Caco-2 (cell line): ENCODE measurements at regions of chr2 and their contacts with region 1.

Region 1: GRCh38 chr2:31835450-31835849 is 175.4 kb downstream of the MEMO1 start:
- DNase-seq: no peak
- H3K4me3 ChIP-seq: no peak overlapping the region
- H3K4me3 Mint-ChIP-seq: no peak overlapping the region
- H3K27ac Mint-ChIP-seq: no peak overlapping the region
- H3K4me1 ChIP-seq: 0 out of 2 replicates have a peak, but pooled peaks cover 3% of the 10 kb centered on the region
- H3K4me1 Mint-ChIP-seq: no peaks in the 10 kb centered on the region
- H3K27me3 ChIP-seq: no peaks in the 10 kb centered on the region
- H3K27me3 Mint-ChIP-seq: no peaks in the 10 kb centered on the region
- CTCF ChIP-seq: no peak

Region 2: DNA sequence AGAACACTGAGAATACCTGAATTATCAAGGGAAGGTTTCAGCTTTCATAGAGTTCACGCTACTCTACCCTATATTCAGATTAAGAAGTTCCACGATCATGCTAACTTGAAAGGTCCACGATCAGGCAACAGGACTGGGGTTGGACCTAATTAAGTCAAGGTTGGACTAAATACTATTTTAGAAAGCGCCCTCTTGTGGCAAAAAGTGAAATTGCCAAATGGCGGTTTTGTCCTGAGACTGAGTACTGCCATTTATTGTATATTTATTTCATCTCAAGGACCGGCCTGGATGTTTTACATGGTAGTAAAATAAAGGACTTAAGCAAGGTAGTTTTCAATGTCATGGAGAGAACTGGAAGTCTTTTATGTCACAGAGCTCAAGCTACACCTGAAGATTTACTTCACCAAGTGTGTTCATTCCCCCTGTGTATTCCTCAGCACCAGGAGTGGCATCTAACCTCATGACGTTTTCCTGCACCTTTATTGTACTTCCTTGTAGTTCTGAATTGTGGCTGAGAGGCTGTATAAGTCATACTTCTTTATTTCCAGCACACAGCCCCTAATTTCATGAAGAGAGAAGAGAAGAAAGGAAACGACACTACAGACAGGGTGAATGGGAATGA is 311.5 kb before region 1 on chr2:
- CTCF ChIA-PET with region 1: interaction called, 3 read pairs
- POLR2A ChIA-PET with region 1: no interaction called
- intact Hi-C with region 1: loop called (anchors 5 kb)
- DNase-seq: peak; percentile 46 to 65
- H3K4me3 ChIP-seq: no peak overlapping the region
- H3K4me3 Mint-ChIP-seq: no peak overlapping the region
- H3K27ac Mint-ChIP-seq: no peak overlapping the region
- H3K4me1 ChIP-seq: no peaks in the 10 kb centered on the region
- H3K4me1 Mint-ChIP-seq: no peaks in the 10 kb centered on the region
- H3K27me3 ChIP-seq: no peaks in the 10 kb centered on the region
- H3K27me3 Mint-ChIP-seq: peaks cover 3% of the 10 kb centered on the region
- CTCF ChIP-seq: peak; percentile 63 to 76

Region 3: GRCh38 chr2:31654241-31654640 is 181.2 kb before region 1 on chr2:
- CTCF ChIA-PET with region 1: no interaction called
- POLR2A ChIA-PET with region 1: no interaction called
- intact Hi-C with region 1: no loop called
- DNase-seq: no peak
- H3K4me3 ChIP-seq: no peak overlapping the region
- H3K4me3 Mint-ChIP-seq: no peak overlapping the region
- H3K27ac Mint-ChIP-seq: no peak overlapping the region
- H3K4me1 ChIP-seq: no peaks in the 10 kb centered on the region
- H3K4me1 Mint-ChIP-seq: no peaks in the 10 kb centered on the region
- H3K27me3 ChIP-seq: no peaks in the 10 kb centered on the region
- H3K27me3 Mint-ChIP-seq: peaks cover 33% of the 10 kb centered on the region
- CTCF ChIP-seq: no peak

Region 4: DNA sequence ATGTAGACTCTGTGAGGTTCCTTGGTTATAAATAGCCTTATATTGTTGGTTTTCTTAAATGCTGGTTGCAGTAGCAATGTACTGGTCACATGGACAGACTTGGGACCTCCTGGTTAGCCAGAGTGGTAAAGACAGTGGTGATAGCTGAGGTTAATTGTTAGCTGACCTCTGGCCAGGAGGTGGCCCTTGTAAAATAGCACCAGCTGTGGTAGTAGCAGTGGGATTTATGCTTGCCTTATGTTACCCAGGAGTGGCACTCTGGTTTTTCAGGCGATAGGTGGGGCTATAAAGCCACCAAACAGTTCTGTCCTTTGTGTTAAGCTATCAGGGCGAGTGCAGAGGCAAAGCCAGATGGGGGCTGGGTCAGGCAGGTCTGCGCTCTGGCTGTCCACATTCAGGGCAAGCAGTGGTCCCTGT is 160.0 kb before region 1 on chr2:
- CTCF ChIA-PET with region 1: interaction called, 4 read pairs
- POLR2A ChIA-PET with region 1: no interaction called
- intact Hi-C with region 1: loop called (anchors 1 kb)
- DNase-seq: peak; percentile 49 to 57
- H3K4me3 ChIP-seq: no peak overlapping the region
- H3K4me3 Mint-ChIP-seq: no peak overlapping the region
- H3K27ac Mint-ChIP-seq: no peak overlapping the region
- H3K4me1 ChIP-seq: no peaks in the 10 kb centered on the region
- H3K4me1 Mint-ChIP-seq: no peaks in the 10 kb centered on the region
- H3K27me3 ChIP-seq: no peaks in the 10 kb centered on the region
- H3K27me3 Mint-ChIP-seq: peaks cover 6% of the 10 kb centered on the region
- CTCF ChIP-seq: peak; percentile 20

Region 5: GRCh38 chr2:31729764-31730092 is 105.7 kb before region 1 on chr2:
- CTCF ChIA-PET with region 1: no interaction called
- POLR2A ChIA-PET with region 1: no interaction called
- intact Hi-C with region 1: loop called (anchors 1 kb)
- DNase-seq: peak in 1 of 2 experiments; percentile 42
- H3K4me3 ChIP-seq: no peak overlapping the region
- H3K4me3 Mint-ChIP-seq: no peak overlapping the region
- H3K27ac Mint-ChIP-seq: no peak overlapping the region
- H3K4me1 ChIP-seq: no peaks in the 10 kb centered on the region
- H3K4me1 Mint-ChIP-seq: no peaks in the 10 kb centered on the region
- H3K27me3 ChIP-seq: no peaks in the 10 kb centered on the region
- H3K27me3 Mint-ChIP-seq: peaks cover 3% of the 10 kb centered on the region
- CTCF ChIP-seq: peak in 1 of 2 experiments; percentile 64